ENCODE measurements at regions of chr14 and their contacts with region 1.

Region 1: GRCh38 chr14:64294672-64295413 is 672 bp upstream of the ESR2 start:
- DNase-seq: peak; percentile 93
- ATAC-seq: peak; percentile 90
- H3K4me3 ChIP-seq: peak overlapping the region; percentile 56 to 90 (median 61)
- H3K4me3 Mint-ChIP-seq: peak overlapping the region; percentile 95
- H3K27ac ChIP-seq: peak overlapping the region; percentile 26 to 67
- H3K27ac Mint-ChIP-seq: peak overlapping the region; percentile 87
- H3K4me1 ChIP-seq: peaks cover 14 to 19% of the 10 kb centered on the region in 2 donors
- H3K4me1 Mint-ChIP-seq: peaks cover 30% of the 10 kb centered on the region
- H3K27me3 ChIP-seq: no peaks in the 10 kb centered on the region
- H3K27me3 Mint-ChIP-seq: no peaks in the 10 kb centered on the region
- CTCF ChIP-seq: peak; percentile 87

Region 2: GRCh38 chr14:63632932-63633514 is 661.8 kb before region 1 on chr14:
- CTCF ChIA-PET with region 1: no interaction called
- POLR2A ChIA-PET with region 1: no interaction called
- intact Hi-C with region 1: loop called (anchors 2 kb)
- DNase-seq: peak; percentile 58
- ATAC-seq: peak; percentile 66
- H3K4me3 ChIP-seq: no peak overlapping the region
- H3K4me3 Mint-ChIP-seq: no peak overlapping the region
- H3K27ac ChIP-seq: no peak overlapping the region
- H3K27ac Mint-ChIP-seq: no peak overlapping the region
- H3K4me1 ChIP-seq: peaks cover 0 to 6% of the 10 kb centered on the region in 2 donors
- H3K4me1 Mint-ChIP-seq: peaks cover 38% of the 10 kb centered on the region
- H3K27me3 ChIP-seq: no peaks in the 10 kb centered on the region
- H3K27me3 Mint-ChIP-seq: no peaks in the 10 kb centered on the region
- CTCF ChIP-seq: peak; percentile 80

Region 3: DNA sequence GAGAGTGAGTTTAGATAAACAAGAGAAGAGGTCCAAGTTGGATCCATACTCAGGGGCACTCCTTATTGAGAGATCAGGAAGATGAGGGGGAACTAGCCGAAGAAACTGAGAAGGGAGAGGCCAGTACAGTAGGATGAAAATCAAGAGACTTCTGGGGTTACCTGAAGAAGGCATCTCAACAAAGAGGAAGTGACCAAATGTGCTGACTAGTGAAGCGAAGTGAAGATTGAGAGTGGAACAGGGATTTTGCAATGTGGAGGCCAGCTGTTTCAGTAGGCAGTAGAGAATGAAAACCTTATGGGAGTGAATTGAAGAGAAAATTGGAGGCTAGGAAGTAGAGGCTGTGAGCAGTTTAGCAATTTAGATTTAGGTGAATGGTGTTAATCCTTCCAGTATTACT is 289.0 kb before region 1 on chr14:
- CTCF ChIA-PET with region 1: interaction called, 63 read pairs
- POLR2A ChIA-PET with region 1: no interaction called
- intact Hi-C with region 1: loop called (anchors 2 kb)
- DNase-seq: no peak
- ATAC-seq: no peak
- H3K4me3 ChIP-seq: no peak overlapping the region
- H3K4me3 Mint-ChIP-seq: no peak overlapping the region
- H3K27ac ChIP-seq: no peak overlapping the region
- H3K27ac Mint-ChIP-seq: no peak overlapping the region
- H3K4me1 ChIP-seq: peaks cover 0 to 3% of the 10 kb centered on the region in 2 donors
- H3K4me1 Mint-ChIP-seq: peaks cover 8% of the 10 kb centered on the region
- H3K27me3 ChIP-seq: no peaks in the 10 kb centered on the region
- H3K27me3 Mint-ChIP-seq: no peaks in the 10 kb centered on the region
- CTCF ChIP-seq: no peak

Region 4: GRCh38 chr14:64126548-64126947 is 168.3 kb before region 1 on chr14:
- CTCF ChIA-PET with region 1: interaction called, 15 read pairs
- POLR2A ChIA-PET with region 1: no interaction called
- intact Hi-C with region 1: no loop called
- DNase-seq: no peak
- ATAC-seq: no peak
- H3K4me3 ChIP-seq: no peak overlapping the region
- H3K4me3 Mint-ChIP-seq: no peak overlapping the region
- H3K27ac ChIP-seq: no peak overlapping the region
- H3K27ac Mint-ChIP-seq: no peak overlapping the region
- H3K4me1 ChIP-seq: no peaks in the 10 kb centered on the region
- H3K4me1 Mint-ChIP-seq: no peaks in the 10 kb centered on the region
- H3K27me3 ChIP-seq: no peaks in the 10 kb centered on the region
- H3K27me3 Mint-ChIP-seq: no peaks in the 10 kb centered on the region
- CTCF ChIP-seq: no peak

Region 5: GRCh38 chr14:64159588-64159987 is 135.3 kb before region 1 on chr14:
- CTCF ChIA-PET with region 1: interaction called, 61 read pairs
- POLR2A ChIA-PET with region 1: no interaction called
- intact Hi-C with region 1: loop called (anchors 1 kb)
- DNase-seq: peak; percentile 68
- ATAC-seq: peak; percentile 62
- H3K4me3 ChIP-seq: no peak overlapping the region
- H3K4me3 Mint-ChIP-seq: no peak overlapping the region
- H3K27ac ChIP-seq: no peak overlapping the region
- H3K27ac Mint-ChIP-seq: no peak overlapping the region
- H3K4me1 ChIP-seq: no peaks in the 10 kb centered on the region
- H3K4me1 Mint-ChIP-seq: peaks cover 9% of the 10 kb centered on the region
- H3K27me3 ChIP-seq: no peaks in the 10 kb centered on the region
- H3K27me3 Mint-ChIP-seq: no peaks in the 10 kb centered on the region
- CTCF ChIP-seq: peak; percentile 62

Region 6: GRCh38 chr14:64209444-64210131 is 85.3 kb before region 1 on chr14:
- CTCF ChIA-PET with region 1: interaction called, 23 read pairs
- POLR2A ChIA-PET with region 1: interaction called, 6 read pairs
- intact Hi-C with region 1: loop called (anchors 2 kb)
- DNase-seq: peak; percentile 83
- ATAC-seq: peak; percentile 90
- H3K4me3 ChIP-seq: no peak overlapping the region
- H3K4me3 Mint-ChIP-seq: peak overlapping the region; percentile 79
- H3K27ac ChIP-seq: peak overlapping the region; percentile 46 to 62
- H3K27ac Mint-ChIP-seq: peak overlapping the region; percentile 93
- H3K4me1 ChIP-seq: peaks cover 34 to 35% of the 10 kb centered on the region in 2 donors
- H3K4me1 Mint-ChIP-seq: peaks cover 38% of the 10 kb centered on the region
- H3K27me3 ChIP-seq: no peaks in the 10 kb centered on the region
- H3K27me3 Mint-ChIP-seq: no peaks in the 10 kb centered on the region
- CTCF ChIP-seq: no peak

Region 7: DNA sequence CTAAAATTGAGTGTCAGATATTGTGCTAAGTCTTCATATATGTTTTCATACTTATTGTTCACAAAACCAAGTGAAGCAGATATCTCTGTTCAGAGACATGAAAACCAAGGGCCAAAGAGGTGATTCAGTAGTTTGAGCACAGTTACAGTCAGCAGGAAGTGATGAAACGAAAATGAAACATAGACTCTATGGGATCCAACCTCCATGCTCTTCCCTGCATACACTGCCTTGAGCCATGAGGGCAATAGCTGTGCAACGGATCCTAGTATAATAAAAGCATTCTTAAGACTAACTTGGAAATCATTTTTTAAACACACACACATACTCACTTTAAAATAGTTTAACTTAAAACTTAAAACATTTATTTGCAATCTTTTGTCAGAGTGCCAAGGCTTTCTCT is 28.6 kb before region 1 on chr14:
- CTCF ChIA-PET with region 1: interaction called, 11 read pairs
- POLR2A ChIA-PET with region 1: no interaction called
- intact Hi-C with region 1: no loop called
- DNase-seq: no peak
- ATAC-seq: no peak
- H3K4me3 ChIP-seq: no peak overlapping the region
- H3K4me3 Mint-ChIP-seq: no peak overlapping the region
- H3K27ac ChIP-seq: no peak overlapping the region
- H3K27ac Mint-ChIP-seq: peak overlapping the region; percentile 11
- H3K4me1 ChIP-seq: peaks cover 14 to 15% of the 10 kb centered on the region in 2 donors
- H3K4me1 Mint-ChIP-seq: peaks cover 27% of the 10 kb centered on the region
- H3K27me3 ChIP-seq: no peaks in the 10 kb centered on the region
- H3K27me3 Mint-ChIP-seq: no peaks in the 10 kb centered on the region
- CTCF ChIP-seq: no peak